ENCODE measurements at regions of chr19 and their contacts with region 1.

Region 1: GRCh38 chr19:12796146-12797071 is 5.1 kb downstream of the JUNB start:
- DNase-seq: peak; percentile 84
- H3K4me3 Mint-ChIP-seq: peak overlapping the region; percentile 62
- H3K27ac Mint-ChIP-seq: peak overlapping the region; percentile 83
- H3K4me1 Mint-ChIP-seq: peaks cover 35% of the 10 kb centered on the region
- H3K27me3 Mint-ChIP-seq: no peaks in the 10 kb centered on the region

Region 2: DNA sequence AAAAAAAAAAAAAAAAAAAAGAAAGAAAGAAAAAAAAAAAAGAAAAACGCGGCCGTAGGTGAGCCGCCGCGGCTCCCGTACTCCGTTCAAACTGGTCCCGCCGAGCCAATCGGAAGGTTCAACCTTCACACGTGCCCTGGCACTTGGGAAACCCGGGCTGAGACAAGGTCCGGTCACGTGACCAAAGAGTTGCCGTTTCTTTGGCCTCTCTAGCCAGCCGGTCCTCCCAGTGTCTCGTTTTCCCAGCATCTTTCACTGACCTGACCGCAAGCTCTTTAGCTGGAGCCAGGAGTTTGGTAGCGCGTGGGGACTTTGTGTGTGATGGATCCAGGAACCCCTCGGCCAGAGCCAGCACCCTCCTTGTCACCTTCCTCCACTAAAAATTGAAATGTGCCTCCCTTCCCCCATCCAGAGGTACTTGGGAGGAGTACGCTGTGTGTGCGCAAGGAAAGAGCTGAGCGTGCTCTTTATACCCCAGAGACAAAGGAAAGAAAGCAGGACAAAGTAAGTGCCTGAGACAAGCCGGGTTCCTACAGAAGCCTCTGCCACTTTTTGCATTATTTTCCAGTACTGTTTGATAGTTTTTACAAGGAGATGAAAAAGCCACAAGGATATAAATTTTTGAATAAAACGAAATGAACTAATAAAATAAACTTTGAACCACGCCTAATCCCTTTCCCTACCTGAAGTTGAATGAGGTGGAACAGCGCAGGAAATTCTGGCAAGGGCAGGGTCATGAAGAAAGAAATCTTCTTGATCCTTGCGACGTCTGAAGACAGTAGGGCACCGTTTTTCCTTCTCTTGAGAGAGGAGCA is 73.6 kb before region 1 on chr19:
- CTCF ChIA-PET with region 1: interaction called, 11 read pairs
- POLR2A ChIA-PET with region 1: interaction called, 24 read pairs
- intact Hi-C with region 1: loop called (anchors 5 kb)
- DNase-seq: peak; percentile 96
- H3K4me3 Mint-ChIP-seq: peak overlapping the region; percentile 92
- H3K27ac Mint-ChIP-seq: peak overlapping the region; percentile 95
- H3K4me1 Mint-ChIP-seq: peaks cover 28% of the 10 kb centered on the region
- H3K27me3 Mint-ChIP-seq: no peaks in the 10 kb centered on the region

Region 3: GRCh38 chr19:12766051-12766521 is 30.3 kb before region 1 on chr19:
- CTCF ChIA-PET with region 1: interaction called, 636 read pairs
- POLR2A ChIA-PET with region 1: interaction called, 21 read pairs
- intact Hi-C with region 1: loop called (anchors 1 kb)
- DNase-seq: peak; percentile 91
- H3K4me3 Mint-ChIP-seq: peak overlapping the region; percentile 43
- H3K27ac Mint-ChIP-seq: no peak overlapping the region
- H3K4me1 Mint-ChIP-seq: peaks cover 12% of the 10 kb centered on the region
- H3K27me3 Mint-ChIP-seq: no peaks in the 10 kb centered on the region

Region 4: DNA sequence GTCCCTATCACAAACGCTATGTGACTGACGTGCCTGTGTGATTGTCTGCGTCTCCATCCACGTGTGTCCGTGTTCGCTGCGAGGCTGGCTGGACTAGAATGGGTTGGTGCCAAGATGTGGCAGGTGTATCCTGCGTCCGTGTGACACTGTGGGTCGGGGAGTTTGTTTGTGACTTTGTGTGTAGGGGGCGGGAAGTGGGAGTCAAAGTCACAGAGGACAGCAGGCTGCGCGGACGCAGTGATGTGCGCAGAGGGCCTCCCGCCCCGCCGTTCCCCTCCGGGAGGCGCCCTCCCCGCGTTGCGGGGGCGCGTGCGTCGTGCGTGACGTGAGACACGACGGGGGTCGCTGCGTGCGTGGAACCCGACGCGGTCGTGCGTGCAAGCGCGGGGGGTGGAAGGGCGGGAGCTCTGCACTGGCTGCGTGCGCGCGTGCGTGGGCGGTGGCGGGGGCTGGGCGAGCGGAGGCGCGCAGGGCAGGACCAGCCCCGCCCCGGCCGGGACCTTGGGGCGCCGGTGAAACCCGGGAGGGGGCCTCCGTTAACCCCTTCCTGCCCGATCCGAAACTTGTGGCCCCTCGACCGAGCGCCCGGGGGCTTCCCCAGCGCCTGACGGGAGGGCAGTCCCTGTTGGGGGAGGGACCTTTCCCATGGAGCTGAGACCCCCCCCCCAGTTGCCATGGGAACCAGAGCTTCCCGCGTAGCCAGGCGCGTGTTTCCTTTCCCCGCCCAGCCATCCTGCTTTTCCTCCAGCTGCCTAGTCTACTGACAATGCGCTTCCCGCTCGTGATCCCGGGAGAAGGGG is 14.0 kb before region 1 on chr19:
- CTCF ChIA-PET with region 1: interaction called, 372 read pairs
- POLR2A ChIA-PET with region 1: interaction called, 89 read pairs
- intact Hi-C with region 1: loop called (anchors 1 kb)
- DNase-seq: peak; percentile 92
- H3K4me3 Mint-ChIP-seq: no peak overlapping the region
- H3K27ac Mint-ChIP-seq: no peak overlapping the region
- H3K4me1 Mint-ChIP-seq: peaks cover 31% of the 10 kb centered on the region
- H3K27me3 Mint-ChIP-seq: no peaks in the 10 kb centered on the region

Region 5: GRCh38 chr19:12847159-12848139 is 51.0 kb after region 1 on chr19:
- CTCF ChIA-PET with region 1: interaction called, 27 read pairs
- POLR2A ChIA-PET with region 1: interaction called, 6 read pairs
- intact Hi-C with region 1: no loop called
- DNase-seq: peak; percentile 90
- H3K4me3 Mint-ChIP-seq: peak overlapping the region; percentile 29
- H3K27ac Mint-ChIP-seq: no peak overlapping the region
- H3K4me1 Mint-ChIP-seq: peaks cover 5% of the 10 kb centered on the region
- H3K27me3 Mint-ChIP-seq: peaks cover 25% of the 10 kb centered on the region

Measured in activated CD4-positive, alpha-beta memory T cell treated with anti-CD3 and anti-CD28 coated beads for 36 hours (primary cell).